ENCODE measurements at regions of chr17 and their contacts with region 1.

Region 1: DNA sequence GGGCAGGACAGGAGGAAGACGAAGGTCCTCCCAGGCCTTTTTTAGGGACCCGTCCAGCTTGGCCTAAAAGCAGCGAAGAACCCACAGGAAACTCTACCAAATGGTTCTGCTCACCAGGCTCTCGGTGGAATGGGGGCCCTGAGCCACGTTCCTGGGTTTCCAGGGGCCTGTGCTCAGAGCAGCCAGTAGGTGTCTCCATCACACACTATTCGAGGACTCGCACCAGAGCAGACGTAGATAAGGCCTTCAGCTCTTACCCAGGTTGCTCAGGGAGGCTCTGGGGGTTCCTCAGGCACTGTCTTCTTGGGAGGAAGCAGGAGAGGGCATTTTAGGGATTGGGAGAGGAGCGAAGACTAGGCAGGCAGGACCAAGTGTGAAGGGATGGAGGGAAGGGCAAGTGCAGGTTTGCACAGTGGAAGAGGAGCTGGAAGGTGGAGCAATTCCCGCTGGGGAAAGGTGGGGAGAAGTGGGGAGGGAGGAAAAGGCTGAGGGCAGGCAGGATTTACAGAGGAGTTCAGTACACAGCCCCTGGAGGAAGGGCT is 157.1 kb downstream of the RGS9 start:
- DNase-seq: peak; percentile 77 to 89
- ATAC-seq: peak; percentile 96 to 99
- H3K4me3 ChIP-seq: no peak overlapping the region
- H3K27ac ChIP-seq: no peak overlapping the region
- H3K4me1 ChIP-seq: no peaks in the 10 kb centered on the region
- CTCF ChIP-seq: peak; percentile 86
- EP300 ChIP-seq: no peak
- POLR2A ChIP-seq: no peak
- RAD21 ChIP-seq: peak; percentile 93 to 94

Region 2: DNA sequence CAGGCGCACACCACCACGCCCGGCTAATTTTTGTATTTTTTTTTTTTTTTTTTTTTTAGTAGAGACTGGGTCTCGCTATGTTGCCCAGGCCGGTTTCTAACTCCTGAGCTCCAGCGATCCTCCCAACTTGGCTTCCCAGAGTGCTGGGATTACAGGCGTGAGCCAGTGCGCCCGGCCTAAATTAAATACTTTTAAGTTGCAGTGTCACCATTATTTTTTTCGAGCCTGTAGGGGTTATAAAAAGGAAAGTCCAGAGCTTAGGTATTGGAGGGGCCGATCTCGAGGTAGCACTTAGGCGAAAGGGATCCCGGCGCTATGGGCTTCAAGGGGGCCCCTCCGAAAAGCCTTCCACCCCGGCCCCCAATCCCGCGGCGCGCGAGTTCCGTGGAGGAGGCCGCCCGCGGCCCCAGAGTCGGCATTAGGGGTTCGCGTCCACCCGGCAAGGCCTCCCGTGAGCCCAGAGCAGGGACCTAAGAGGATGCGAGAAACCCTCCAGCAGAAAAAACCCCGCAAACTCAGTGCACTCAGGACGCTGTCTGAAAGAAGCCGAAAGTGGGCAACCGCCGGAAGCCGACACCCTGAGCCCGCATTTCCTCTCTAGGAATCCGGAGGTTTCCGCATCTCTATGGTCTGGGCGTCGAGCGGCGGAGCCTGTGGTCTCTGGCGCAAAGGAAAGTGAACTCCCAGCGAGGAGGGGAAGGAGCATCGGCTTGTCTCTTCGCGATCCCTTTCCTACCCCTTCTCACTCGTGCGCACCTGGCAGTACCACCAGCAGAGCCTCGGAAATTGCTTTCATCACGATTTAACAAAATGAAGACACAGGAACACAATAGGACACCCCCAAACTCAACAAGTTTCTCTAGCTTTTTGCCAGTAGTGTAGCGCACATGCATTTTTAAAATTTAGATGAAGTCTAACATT is 171.2 kb before region 1 on chr17:
- CTCF ChIA-PET with region 1: no interaction called
- POLR2A ChIA-PET with region 1: no interaction called
- DNase-seq: peak; percentile 94 to 98
- ATAC-seq: peak; percentile 93 to 95
- H3K4me3 ChIP-seq: peak overlapping the region; percentile 53
- H3K27ac ChIP-seq: peak overlapping the region; percentile 77 to 93
- H3K4me1 ChIP-seq: peaks cover 19% of the 10 kb centered on the region
- CTCF ChIP-seq: no peak
- EP300 ChIP-seq: no peak
- POLR2A ChIP-seq: peak; percentile 86
- RAD21 ChIP-seq: peak in 1 of 2 experiments; percentile 44; a peak in 2 of 5 replicates

Region 3: DNA sequence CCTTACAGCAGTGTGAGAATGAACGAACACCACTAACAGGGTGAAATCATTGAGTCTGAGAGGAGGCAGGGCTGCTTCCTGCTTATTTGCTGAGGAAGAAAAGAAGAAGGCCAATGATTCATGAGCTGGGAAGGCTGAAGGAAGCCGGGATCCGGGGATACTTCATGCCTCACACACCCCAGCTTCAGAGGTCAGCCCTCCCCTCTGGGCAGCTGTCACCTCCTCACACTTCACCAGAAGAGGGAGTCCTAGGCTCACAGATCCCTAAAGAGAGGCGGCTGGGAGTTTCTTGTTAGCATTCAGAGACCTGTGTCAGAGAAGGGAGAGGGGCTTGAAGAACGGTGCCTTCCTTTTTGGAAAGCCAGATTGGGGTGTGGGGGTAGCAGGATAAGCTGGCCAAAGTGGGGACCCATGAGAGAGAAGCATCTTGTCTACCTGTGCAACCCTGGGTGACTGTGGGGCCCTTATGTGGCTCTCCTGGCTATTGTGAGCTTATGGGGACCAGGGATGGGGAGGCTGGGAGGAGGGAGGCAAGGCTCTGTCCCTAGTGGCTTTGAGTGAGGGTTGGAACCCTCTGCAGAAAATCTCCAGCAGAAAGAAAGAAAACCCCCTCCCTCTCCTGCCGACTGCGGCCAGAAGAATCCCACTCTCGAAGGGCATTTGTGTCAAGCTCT is 62.5 kb before region 1 on chr17:
- CTCF ChIA-PET with region 1: interaction called, 20 read pairs
- POLR2A ChIA-PET with region 1: no interaction called
- DNase-seq: peak; percentile 76 to 94
- ATAC-seq: peak; percentile 89 to 96
- H3K4me3 ChIP-seq: no peak overlapping the region
- H3K27ac ChIP-seq: no peak overlapping the region
- H3K4me1 ChIP-seq: no peaks in the 10 kb centered on the region
- CTCF ChIP-seq: peak; percentile 89
- EP300 ChIP-seq: no peak
- POLR2A ChIP-seq: no peak
- RAD21 ChIP-seq: peak; percentile 95 to 97

Region 4: DNA sequence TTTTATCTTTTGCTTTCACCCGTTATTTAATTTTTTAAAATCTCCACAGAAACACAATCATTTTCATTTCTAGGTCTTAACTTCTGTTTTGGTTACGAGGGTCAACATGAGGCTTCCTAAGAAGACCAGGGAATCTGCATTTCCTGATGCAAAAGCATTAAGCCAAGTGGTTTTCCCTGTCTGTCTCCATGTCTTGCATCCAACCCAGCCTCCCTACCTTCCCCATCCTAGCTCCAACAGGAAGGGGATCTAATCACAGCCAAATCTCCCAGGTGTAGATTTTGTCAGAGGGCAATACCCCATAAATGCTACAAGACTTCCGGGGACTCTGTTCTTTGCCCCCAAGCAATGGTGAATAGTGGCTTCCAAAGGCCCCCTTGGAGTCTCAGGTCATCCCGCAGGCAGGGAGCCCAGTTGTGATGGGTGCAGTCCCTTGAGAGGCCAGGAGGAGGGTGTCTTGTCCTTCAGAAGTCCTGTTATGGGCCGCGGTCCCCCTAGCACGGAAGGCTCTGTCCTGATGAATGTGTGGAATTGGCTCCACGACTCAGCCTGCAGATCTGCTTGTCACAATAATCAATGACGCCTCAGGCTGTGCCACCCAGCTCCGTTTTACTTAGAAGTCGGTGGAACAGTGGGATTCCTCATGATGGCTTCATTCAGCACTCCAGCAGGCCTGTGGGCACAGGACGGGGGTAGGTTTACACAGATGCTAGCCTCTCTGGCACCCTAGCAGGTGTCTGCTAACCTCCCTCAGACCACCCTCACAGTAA is 16.0 kb before region 1 on chr17:
- CTCF ChIA-PET with region 1: interaction called, 41 read pairs
- POLR2A ChIA-PET with region 1: no interaction called
- DNase-seq: peak; percentile 73 to 87
- ATAC-seq: peak; percentile 97 to 99
- H3K4me3 ChIP-seq: no peak overlapping the region
- H3K27ac ChIP-seq: no peak overlapping the region
- H3K4me1 ChIP-seq: no peaks in the 10 kb centered on the region
- CTCF ChIP-seq: peak; percentile 71
- EP300 ChIP-seq: no peak
- POLR2A ChIP-seq: peak; percentile 13; the same call in 1 of the 2 replicates
- RAD21 ChIP-seq: peak; percentile 90 to 92

Region 5: DNA sequence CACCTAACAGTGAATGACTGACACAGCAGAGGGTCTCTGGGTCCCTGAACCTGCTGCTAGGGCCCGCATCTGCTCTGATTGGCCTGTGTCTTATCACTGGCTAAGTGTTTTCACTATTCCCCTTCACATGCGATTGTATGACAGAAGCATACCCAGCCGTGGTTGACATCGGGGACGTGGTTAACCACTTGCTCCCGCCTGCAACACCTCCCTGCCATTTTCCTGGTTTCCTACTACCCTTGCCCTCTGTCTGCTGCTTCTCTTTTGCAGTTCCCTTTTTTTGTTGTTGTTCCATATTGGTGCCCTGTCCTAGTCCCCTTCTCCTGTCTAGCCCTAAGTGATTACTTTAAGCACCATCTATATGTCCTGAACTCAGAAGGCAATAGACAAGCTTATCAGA is 20.0 kb after region 1 on chr17:
- CTCF ChIA-PET with region 1: interaction called, 29 read pairs
- POLR2A ChIA-PET with region 1: no interaction called
- DNase-seq: no peak
- ATAC-seq: no peak
- H3K4me3 ChIP-seq: no peak overlapping the region
- H3K27ac ChIP-seq: no peak overlapping the region
- H3K4me1 ChIP-seq: no peaks in the 10 kb centered on the region
- CTCF ChIP-seq: no peak
- EP300 ChIP-seq: no peak
- POLR2A ChIP-seq: no peak
- RAD21 ChIP-seq: no peak

Region 6: DNA sequence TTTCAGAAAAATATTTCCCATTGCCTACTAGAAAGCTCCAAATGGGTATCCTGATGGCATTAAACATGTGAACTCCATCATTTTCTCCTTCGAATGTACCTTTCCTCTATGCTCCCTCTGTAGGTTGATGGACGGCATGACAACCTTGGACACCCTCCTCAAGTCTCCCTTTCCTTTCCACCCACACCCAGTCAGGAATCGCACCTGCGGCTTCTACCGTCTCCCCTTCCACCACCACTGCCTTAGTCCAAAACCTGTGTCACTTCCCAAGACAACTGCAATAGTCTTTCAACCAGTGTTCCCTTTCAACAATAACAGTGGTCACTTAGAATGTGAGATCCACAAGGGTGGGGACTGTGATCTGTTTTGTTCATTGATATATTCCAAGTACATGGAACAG is 500.3 kb after region 1 on chr17:
- CTCF ChIA-PET with region 1: interaction called, 10 read pairs
- POLR2A ChIA-PET with region 1: no interaction called
- DNase-seq: peak; percentile 49 to 63
- ATAC-seq: peak; percentile 55 to 87; a peak in 4 of 6 replicates
- H3K4me3 ChIP-seq: no peak overlapping the region
- H3K27ac ChIP-seq: no peak overlapping the region
- H3K4me1 ChIP-seq: no peaks in the 10 kb centered on the region
- CTCF ChIP-seq: peak; percentile 53
- EP300 ChIP-seq: no peak
- POLR2A ChIP-seq: no peak
- RAD21 ChIP-seq: peak; percentile 63 to 70

Region 7: GRCh38 chr17:66165513-66166123 is 871.4 kb after region 1 on chr17:
- CTCF ChIA-PET with region 1: interaction called, 101 read pairs
- POLR2A ChIA-PET with region 1: no interaction called
- DNase-seq: peak; percentile 65 to 72
- ATAC-seq: peak; percentile 68 to 81; a peak in 4 of 6 replicates
- H3K4me3 ChIP-seq: no peak overlapping the region
- H3K27ac ChIP-seq: no peak overlapping the region
- H3K4me1 ChIP-seq: no peaks in the 10 kb centered on the region
- CTCF ChIP-seq: peak; percentile 96
- EP300 ChIP-seq: no peak
- POLR2A ChIP-seq: no peak
- RAD21 ChIP-seq: peak; percentile 95 to 98